Common myeloid progenitor, CD34-positive (primary cell): ENCODE measurements at regions of chr19 and their contacts with region 1.

Region 1: GRCh38 chr19:5690125-5690954 is at the start of gene RPL36:
- DNase-seq: peak; percentile 94 to 97 (median 96)
- H3K4me3 ChIP-seq: peak within 1 kb of the TSS; percentile 69 to 99 (median 88)
- H3K27ac ChIP-seq: peak within 1 kb of the TSS; percentile 92 to 94
- H3K4me1 ChIP-seq: peaks cover 0 to 35% (median 28%) of the 10 kb centered on the region in 4 experiments
- H3K27me3 ChIP-seq: no peaks in the 10 kb centered on the region

Region 2: DNA sequence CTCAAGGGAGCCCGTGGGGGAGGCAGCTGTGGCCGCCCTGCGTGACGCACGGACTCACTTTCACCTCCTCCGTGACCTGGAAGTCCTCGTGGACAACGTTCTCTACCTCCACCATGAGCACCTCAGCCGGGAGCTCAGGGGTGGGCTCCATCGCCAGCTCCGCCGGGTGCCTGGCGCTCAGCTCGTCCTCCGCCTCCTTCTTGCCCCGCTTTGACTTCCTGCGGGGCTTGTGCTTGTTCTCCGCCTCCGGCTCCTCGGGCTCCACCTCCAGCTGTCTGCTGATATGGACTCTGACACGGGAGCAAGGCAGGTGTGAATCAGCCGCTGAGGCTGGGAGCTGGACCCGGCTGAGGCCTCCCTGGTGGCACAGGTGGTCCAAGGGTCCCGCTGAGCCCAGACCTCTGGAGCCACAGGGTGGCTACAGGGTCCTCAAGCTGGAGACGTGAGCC is 21.4 kb after region 1 on chr19:
- CTCF ChIA-PET with region 1: interaction called, 10 read pairs
- POLR2A ChIA-PET with region 1: no interaction called
- DNase-seq: no peak
- H3K4me3 ChIP-seq: no peak overlapping the region
- H3K27ac ChIP-seq: no peak overlapping the region
- H3K4me1 ChIP-seq: no peaks in the 10 kb centered on the region
- H3K27me3 ChIP-seq: no peaks in the 10 kb centered on the region

Region 3: GRCh38 chr19:5719961-5720790 is 29.8 kb after region 1 on chr19 and contains the starts of genes CATSPERD and LONP1:
- CTCF ChIA-PET with region 1: interaction called, 16 read pairs
- POLR2A ChIA-PET with region 1: interaction called, 8 read pairs
- DNase-seq: peak; percentile 99 to 100 (median 99)
- H3K4me3 ChIP-seq: peak within 1 kb of the TSS; percentile 65 to 96 (median 92)
- H3K27ac ChIP-seq: peak within 1 kb of the TSS; percentile 84 to 93
- H3K4me1 ChIP-seq: peaks cover 4 to 26% (median 18%) of the 10 kb centered on the region in 4 experiments
- H3K27me3 ChIP-seq: no peaks in the 10 kb centered on the region